Heart right ventricle (tissue), 16 donors: ENCODE measurements at regions of chr18 and their contacts with region 1.

Region 1: DNA sequence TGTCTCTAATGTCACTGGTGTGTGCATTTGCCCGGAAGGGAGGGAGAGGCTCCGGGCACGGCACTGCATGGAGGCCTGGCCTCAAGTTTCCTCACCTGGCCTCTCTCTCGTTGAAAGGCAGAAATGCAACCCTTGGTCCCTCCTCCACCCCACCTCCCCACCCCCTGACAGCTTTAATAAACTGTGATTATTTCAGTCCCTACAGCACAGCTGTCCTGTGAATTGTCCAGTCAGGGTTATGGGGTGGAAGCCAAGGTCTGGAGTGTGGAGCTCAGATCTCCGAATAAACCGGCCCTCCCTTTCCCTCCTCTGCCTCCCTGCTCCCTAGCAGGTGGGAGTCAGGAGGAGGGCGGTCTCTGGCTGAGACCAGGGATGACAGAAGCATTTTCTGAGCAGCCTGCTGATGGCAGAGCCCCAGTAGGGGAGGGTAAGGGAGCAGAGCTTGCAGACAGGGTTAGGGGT is 199.2 kb upstream of the SMAD2 start:
- DNase-seq: no peak
- ATAC-seq: peak in 1 of 8 donors; percentile 35
- H3K4me3 ChIP-seq: no peak overlapping the region
- H3K27ac ChIP-seq: no peak overlapping the region
- H3K4me1 ChIP-seq: peaks cover 0 to 4% (median 0%) of the 10 kb centered on the region in 9 donors
- H3K27me3 ChIP-seq: peaks cover 0 to 7% (median 0%) of the 10 kb centered on the region in 7 donors
- CTCF ChIP-seq: no peak

Region 2: GRCh38 chr18:47826157-47827074 is 303.2 kb before region 1 on chr18:
- intact Hi-C with region 1: no loop called
- DNase-seq: no peak
- ATAC-seq: no peak
- H3K4me3 ChIP-seq: no peak overlapping the region
- H3K27ac ChIP-seq: no peak overlapping the region
- H3K4me1 ChIP-seq: no peaks in the 10 kb centered on the region
- H3K27me3 ChIP-seq: no peaks in the 10 kb centered on the region
- CTCF ChIP-seq: no peak

Region 3: GRCh38 chr18:47883771-47884413 is 245.8 kb before region 1 on chr18:
- intact Hi-C with region 1: no loop called
- DNase-seq: peak in 1 of 2 donors; percentile 36
- ATAC-seq: peak in 5 of 8 donors; percentile 47 to 70 (median 49)
- H3K4me3 ChIP-seq: no peak overlapping the region
- H3K27ac ChIP-seq: no peak overlapping the region
- H3K4me1 ChIP-seq: peaks cover 0 to 10% (median 0%) of the 10 kb centered on the region in 9 donors
- H3K27me3 ChIP-seq: no peaks in the 10 kb centered on the region
- CTCF ChIP-seq: no peak

Region 4: DNA sequence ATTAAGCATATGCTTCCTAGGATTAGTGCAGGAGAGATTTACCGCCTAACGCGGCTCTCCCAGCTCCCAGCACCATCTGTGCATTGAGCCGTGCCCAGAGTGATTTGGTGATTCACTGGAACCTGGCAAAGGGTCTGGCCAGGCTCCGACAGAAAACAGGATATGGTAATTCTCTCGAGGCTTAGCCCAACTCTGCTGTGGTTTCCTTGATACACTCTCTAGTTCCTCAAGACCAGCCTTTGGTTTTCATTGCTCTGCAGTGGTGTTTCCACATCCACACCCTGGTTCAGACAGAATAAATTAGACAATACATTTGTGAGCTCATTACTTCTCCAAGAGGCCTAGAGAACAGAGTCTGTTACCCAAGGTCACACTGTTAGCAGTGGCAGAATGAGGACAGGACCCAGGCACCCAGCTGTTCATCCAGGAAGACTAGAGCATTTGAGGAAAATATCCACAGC is 176.2 kb before region 1 on chr18:
- intact Hi-C with region 1: no loop called
- DNase-seq: peak in 1 of 2 donors; percentile 15
- ATAC-seq: peak in 7 of 8 donors; percentile 39 to 72 (median 45)
- H3K4me3 ChIP-seq: no peak overlapping the region
- H3K27ac ChIP-seq: peak overlapping the region in 2 of 10 donors; percentile 14 to 43
- H3K4me1 ChIP-seq: peaks cover 0 to 22% (median 9%) of the 10 kb centered on the region in 9 donors
- H3K27me3 ChIP-seq: no peaks in the 10 kb centered on the region
- CTCF ChIP-seq: no peak

Region 5: DNA sequence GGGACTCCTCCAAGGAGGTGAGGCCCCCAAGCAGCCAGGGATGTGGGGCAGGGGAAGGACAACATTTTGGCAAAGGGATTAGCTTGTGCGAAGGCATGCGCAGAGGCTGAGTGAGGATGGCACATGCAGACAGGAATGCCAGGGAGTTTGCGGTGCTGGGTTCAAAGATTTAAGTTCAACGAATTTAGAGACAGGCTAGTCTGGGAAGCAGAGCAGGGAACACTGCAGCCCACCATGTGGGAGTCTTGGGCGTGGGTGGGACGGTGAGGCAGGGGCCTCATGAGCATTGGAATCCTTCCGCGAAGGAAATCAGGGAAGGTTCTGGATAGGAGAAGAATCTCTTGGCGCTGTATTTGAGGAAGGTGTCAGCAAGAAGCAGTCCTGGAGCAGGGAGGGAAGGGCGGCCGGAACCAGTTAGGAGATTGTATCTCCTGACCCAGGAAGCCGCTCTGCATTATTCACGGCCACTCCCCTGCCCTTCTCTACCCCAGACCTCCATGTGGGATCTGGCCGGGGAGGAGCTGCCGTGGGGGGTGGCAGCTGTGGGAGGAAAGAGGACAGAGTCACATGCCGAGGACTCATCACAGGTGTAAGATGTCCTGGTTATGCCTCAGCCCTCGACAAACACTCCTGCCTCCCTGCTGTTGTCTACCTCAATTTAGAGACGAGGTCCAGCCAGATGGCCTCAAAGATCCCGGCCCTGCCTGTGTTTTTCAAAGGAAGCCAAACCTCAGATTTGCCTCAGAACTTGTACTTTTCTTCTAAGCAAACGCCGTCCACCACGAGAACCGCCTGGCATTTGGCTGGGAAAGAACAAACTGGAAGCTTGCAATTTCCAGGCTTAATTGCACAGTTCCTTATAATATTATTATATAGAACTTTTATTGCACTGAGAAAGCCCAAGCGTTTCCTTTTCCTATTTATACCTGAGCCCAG is 75.5 kb before region 1 on chr18:
- intact Hi-C with region 1: no loop called
- DNase-seq: no peak
- ATAC-seq: peak in 1 of 8 donors; percentile 34
- H3K4me3 ChIP-seq: no peak overlapping the region
- H3K27ac ChIP-seq: no peak overlapping the region
- H3K4me1 ChIP-seq: peaks cover 0 to 6% (median 0%) of the 10 kb centered on the region in 9 donors
- H3K27me3 ChIP-seq: peaks cover 0 to 17% (median 3%) of the 10 kb centered on the region in 7 donors
- CTCF ChIP-seq: no peak

Region 6: GRCh38 chr18:48172226-48173006 is 42.8 kb after region 1 on chr18:
- intact Hi-C with region 1: loop called in 1 of 10 experiments (anchors 10 kb)
- DNase-seq: no peak
- ATAC-seq: no peak
- H3K4me3 ChIP-seq: no peak overlapping the region
- H3K27ac ChIP-seq: no peak overlapping the region
- H3K4me1 ChIP-seq: peaks cover 0 to 12% (median 7%) of the 10 kb centered on the region in 9 donors
- H3K27me3 ChIP-seq: no peaks in the 10 kb centered on the region
- CTCF ChIP-seq: no peak